ENCODE measurements at regions of chr11 and their contacts with region 1.

Region 1: DNA sequence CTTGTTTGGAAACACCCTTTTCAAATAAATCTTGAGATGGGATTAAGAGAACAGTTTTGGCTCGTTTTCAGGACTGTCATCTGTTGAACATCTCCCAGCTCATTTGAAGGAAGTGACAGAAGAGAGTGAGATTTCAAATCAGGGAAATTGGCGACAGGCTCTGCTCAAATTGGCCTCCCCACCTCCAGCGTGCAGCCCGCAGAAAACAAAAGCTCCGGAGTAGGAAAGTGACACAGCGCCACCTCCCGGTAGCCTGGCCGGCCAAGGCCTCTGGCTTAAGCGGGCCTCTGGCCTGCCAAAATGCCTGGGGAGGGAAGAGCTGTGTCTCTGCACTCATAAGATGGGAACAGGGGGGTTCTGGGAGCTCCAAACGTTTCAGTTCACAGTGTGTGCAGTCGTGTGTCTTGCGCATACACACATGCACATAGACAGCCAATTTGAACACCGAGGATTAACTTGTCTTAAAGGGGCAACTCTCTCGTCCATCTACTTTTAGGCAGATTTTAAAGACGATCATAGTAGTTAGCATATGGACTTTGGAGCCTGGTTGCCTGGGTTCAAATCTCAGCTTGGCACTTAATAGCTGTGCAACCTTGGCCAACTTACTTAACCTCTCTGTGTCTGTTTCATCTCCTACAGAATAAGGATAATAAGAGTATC is 132.7 kb upstream of the RCN1 start:
- ATAC-seq: peak; percentile 58 to 98 (median 70)
- H3K4me3 ChIP-seq: no peak overlapping the region
- H3K27ac ChIP-seq: no peak overlapping the region
- H3K4me1 ChIP-seq: peaks cover 0 to 9% of the 10 kb centered on the region in 2 donors

Region 2: DNA sequence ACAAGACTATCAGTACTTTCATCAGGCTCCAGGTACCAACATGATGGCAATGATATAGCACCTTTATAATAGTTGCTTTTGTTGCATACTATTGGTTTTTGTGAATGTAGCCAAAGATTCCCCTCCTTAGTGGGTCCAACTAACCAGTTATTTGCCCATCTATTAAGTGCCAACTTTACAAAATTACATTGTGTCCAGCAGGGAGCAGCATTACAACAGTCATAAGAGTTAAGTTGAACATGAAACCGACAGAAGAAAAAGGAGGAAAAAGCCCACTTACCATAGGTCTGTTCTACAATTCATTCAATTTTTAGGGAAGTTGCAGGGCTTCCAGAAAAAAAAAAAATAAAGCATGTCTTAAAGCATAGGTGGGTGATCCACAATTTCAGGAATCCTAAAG is 470.4 kb before region 1 on chr11:
- in situ Hi-C with region 1: loop called in 2 of 9 experiments (anchors 25 kb)
- ATAC-seq: peak in 3 of 8 experiments; percentile 26 to 38 (median 37)
- H3K4me3 ChIP-seq: no peak overlapping the region
- H3K27ac ChIP-seq: no peak overlapping the region
- H3K4me1 ChIP-seq: no peaks in the 10 kb centered on the region

Region 3: GRCh38 chr11:31601635-31602282 is 356.4 kb before region 1 on chr11:
- in situ Hi-C with region 1: no loop called
- ATAC-seq: no peak
- H3K4me3 ChIP-seq: no peak overlapping the region
- H3K27ac ChIP-seq: no peak overlapping the region
- H3K4me1 ChIP-seq: no peaks in the 10 kb centered on the region